ENCODE measurements at regions of chr5 and their contacts with region 1.

Region 1: DNA sequence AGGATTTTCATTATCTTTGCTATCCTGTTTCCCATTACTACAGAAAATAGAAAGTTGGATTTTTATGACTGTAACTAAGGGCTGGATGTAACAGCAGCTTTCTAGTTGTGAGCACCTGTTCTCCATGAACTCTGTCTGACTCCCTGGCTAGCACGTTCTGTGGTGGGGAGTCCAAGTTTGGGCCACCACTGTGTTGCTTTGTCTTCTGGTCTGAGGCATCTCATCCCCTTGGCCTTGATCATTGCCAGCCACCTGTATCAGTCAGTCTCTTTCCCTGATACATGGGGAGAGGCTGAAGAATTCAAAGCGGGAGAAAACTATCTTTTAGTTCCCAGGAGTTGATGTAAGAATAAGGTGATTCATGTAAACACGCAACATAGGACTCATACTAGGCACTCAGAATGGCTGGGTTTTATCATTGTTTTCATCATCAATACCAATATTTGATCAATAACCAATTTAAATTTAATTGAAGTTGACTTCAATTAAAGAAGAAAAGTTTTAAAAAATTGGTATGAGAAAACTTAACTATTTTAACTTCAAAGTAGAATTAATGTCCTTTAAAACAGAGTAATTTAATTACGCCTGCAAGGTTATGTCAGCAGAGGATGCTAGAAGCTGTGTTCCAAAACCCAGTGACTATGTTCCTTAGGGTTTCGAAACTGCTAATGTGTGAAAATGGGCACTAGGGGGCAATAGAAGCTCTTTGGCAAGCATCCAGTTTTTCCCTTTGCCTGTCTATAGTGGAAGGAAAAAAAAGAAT is 33.6 kb downstream of the WDR70 start:
- DNase-seq: peak; percentile 59
- ATAC-seq: peak; percentile 77
- H3K4me3 Mint-ChIP-seq: no peak overlapping the region
- H3K27ac Mint-ChIP-seq: no peak overlapping the region
- H3K4me1 Mint-ChIP-seq: no peaks in the 10 kb centered on the region
- H3K27me3 Mint-ChIP-seq: no peaks in the 10 kb centered on the region

Region 2: DNA sequence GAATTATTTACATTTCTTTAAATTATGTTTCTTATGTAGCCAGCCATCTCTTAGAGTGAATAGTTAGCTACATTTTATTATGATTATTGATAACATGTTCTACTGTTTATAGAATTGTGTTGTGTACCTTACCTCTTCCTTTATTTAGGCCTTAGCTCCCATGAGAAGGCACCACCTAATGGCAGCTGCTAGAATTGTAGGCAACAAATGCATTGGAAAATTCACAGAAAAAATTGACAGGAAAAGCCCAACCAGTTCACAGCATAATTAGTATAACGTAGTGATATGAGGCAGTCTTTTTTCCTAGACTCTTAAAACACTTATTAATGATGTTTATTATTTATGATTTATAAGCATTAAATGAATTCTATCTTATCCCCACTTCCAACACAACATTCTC is 142.2 kb after region 1 on chr5:
- CTCF ChIA-PET with region 1: interaction called, 4 read pairs
- POLR2A ChIA-PET with region 1: no interaction called
- intact Hi-C with region 1: loop called (anchors 1 kb)
- DNase-seq: peak; percentile 28
- ATAC-seq: no peak
- H3K4me3 Mint-ChIP-seq: no peak overlapping the region
- H3K27ac Mint-ChIP-seq: no peak overlapping the region
- H3K4me1 Mint-ChIP-seq: peaks cover 4% of the 10 kb centered on the region
- H3K27me3 Mint-ChIP-seq: no peaks in the 10 kb centered on the region

Region 3: GRCh38 chr5:37837414-37838032 is 424.8 kb after region 1 on chr5:
- CTCF ChIA-PET with region 1: interaction called, 5 read pairs
- POLR2A ChIA-PET with region 1: no interaction called
- intact Hi-C with region 1: loop called (anchors 1 to 2 kb)
- DNase-seq: peak; percentile 90
- ATAC-seq: peak; percentile 69
- H3K4me3 Mint-ChIP-seq: peak overlapping the region; percentile 55
- H3K27ac Mint-ChIP-seq: no peak overlapping the region
- H3K4me1 Mint-ChIP-seq: peaks cover 28% of the 10 kb centered on the region
- H3K27me3 Mint-ChIP-seq: peaks cover 77% of the 10 kb centered on the region

Region 4: GRCh38 chr5:38193015-38193581 is 780.4 kb after region 1 on chr5:
- CTCF ChIA-PET with region 1: interaction called, 8 read pairs
- POLR2A ChIA-PET with region 1: no interaction called
- intact Hi-C with region 1: loop called (anchors 1 to 5 kb)
- DNase-seq: peak; percentile 78
- ATAC-seq: peak; percentile 77
- H3K4me3 Mint-ChIP-seq: no peak overlapping the region
- H3K27ac Mint-ChIP-seq: no peak overlapping the region
- H3K4me1 Mint-ChIP-seq: peaks cover 4% of the 10 kb centered on the region
- H3K27me3 Mint-ChIP-seq: peaks cover 21% of the 10 kb centered on the region